Caco-2 (cell line): ENCODE measurements at regions of chr6 and their contacts with region 1.

Region 1: DNA sequence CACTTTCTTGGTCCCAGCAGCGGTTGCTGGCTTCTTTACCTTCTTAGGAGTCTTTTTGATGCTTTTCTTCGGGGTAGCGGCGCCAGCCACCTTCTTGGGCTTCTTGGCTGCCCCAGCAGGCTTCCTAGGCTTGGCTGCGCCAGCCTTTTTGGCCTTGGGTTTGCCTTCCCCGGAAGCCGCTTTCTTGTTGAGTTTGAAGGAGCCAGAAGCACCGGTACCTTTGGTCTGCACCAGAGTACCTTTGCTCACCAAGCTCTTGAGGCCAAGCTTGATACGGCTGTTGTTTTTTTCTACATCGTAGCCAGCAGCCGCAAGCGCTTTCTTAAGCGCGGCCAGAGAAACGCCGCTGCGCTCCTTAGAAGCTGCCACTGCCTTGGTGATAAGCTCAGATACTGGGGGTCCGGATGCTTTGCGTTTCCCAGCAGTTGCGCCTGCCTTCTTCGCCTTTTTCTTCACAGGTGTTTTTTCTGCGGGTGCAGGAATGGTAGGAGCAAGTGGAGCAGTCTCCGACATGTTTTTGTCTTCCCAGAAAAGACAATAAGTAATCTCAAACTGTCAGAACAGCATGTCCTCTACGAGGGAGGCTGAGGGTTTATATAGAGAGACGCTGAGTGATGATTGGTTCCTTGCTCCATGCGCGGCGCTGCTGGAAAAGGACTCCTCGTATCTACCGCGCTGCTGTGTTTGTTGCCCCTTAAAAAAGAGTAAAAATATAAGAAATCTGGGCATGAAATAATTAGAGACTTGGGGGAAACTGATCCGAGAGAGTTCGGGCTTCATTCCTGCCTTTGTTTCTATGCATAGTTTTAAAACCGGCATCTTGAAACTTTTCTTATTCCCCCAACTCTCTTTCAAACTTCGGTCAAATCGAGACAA is 130.3 kb upstream of the BTN3A2 start:
- DNase-seq: peak; percentile 79 to 81
- H3K4me3 ChIP-seq: peak overlapping the region; percentile 52
- H3K4me3 Mint-ChIP-seq: peak overlapping the region; percentile 76
- H3K27ac Mint-ChIP-seq: peak overlapping the region; percentile 92
- H3K4me1 ChIP-seq: peaks cover 11% of the 10 kb centered on the region; the same call in 1 of the 2 replicates
- H3K4me1 Mint-ChIP-seq: no peaks in the 10 kb centered on the region
- H3K27me3 ChIP-seq: no peaks in the 10 kb centered on the region
- H3K27me3 Mint-ChIP-seq: no peaks in the 10 kb centered on the region
- CTCF ChIP-seq: no peak

Region 2: DNA sequence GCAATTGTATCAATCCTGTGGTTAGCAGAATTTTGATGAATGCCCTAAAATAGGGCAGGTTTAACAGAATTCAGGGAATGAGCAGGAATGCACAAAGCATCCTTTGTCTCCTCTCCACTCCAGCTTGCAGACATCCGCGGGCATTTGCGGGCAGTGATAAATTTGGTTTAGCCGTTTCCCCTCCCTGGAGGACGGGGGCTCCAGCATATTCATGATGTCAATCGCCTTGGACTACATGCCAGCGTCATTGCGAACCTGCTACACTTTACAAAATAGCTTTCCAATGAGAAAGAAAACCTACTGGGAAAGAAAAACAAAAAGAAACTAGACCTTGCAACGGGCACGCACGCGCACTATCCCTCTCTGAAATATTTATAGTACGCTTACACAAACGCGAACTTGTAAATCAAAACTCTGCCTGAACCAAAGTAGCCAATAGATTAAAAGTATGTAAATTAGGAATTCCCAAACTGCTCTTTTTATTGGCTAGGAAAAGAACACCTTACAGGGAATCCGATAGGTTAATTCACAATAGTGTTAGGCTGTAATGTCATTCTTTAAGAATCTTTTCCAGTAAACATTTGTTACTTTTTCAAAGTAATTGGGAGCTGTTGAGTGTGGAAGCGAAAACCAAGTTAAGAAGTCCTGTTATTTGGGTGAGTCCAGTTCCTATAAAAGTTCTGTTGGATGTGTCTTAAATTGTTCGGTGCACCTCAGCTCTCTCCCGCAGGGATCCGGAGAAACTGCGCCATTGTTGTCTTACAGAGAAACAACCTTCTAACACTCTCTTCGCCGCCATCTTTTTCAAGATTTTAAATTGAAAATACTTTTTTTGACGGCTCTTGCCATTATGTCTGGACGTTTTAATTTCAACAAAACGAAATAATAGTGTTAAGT is 10.8 kb before region 1 on chr6:
- CTCF ChIA-PET with region 1: interaction called, 4 read pairs
- POLR2A ChIA-PET with region 1: interaction called, 19 read pairs
- intact Hi-C with region 1: loop called (anchors 1 kb)
- DNase-seq: peak; percentile 63 to 69
- H3K4me3 ChIP-seq: peak overlapping the region; percentile 55
- H3K4me3 Mint-ChIP-seq: no peak overlapping the region
- H3K27ac Mint-ChIP-seq: no peak overlapping the region
- H3K4me1 ChIP-seq: 0 out of 2 replicates have a peak, but pooled peaks cover 8% of the 10 kb centered on the region
- H3K4me1 Mint-ChIP-seq: no peaks in the 10 kb centered on the region
- H3K27me3 ChIP-seq: no peaks in the 10 kb centered on the region
- H3K27me3 Mint-ChIP-seq: no peaks in the 10 kb centered on the region
- CTCF ChIP-seq: no peak